ENCODE measurements at regions of chr2 and their contacts with region 1.

Region 1: DNA sequence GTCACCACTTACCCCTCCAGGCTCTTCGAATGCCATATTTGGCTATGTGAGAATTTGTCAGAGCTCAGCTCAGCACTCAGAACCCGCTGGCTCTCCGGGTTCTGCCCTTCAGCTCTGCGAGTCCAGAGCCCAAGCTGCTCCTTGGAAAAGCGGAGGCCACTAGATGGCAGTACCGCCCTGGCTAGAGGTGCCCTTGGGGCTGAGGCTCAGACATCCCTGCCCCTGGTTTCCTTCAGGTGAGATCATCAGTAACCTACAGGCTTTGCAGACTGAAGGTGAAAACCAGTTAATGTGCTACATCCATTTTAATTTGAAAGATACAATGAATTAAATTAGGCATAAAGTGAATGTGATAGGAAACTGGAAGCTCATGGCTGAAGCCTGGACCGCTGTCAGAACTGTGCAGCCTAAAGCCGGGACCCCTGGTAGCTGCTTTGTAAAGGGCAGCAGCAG is 285.6 kb downstream of the AGAP1 start:
- DNase-seq: no peak
- H3K4me3 ChIP-seq: no peak overlapping the region
- H3K27ac ChIP-seq: no peak overlapping the region
- H3K4me1 ChIP-seq: no peaks in the 10 kb centered on the region
- H3K27me3 ChIP-seq: no peaks in the 10 kb centered on the region
- CTCF ChIP-seq: peak; percentile 21 to 77 (median 33)
- POLR2A ChIP-seq: no peak

Region 2: GRCh38 chr2:236177967-236178899 is 398.8 kb after region 1 on chr2:
- intact Hi-C with region 1: loop called (anchors 5 kb)
- DNase-seq: no peak
- H3K4me3 ChIP-seq: no peak overlapping the region
- H3K27ac ChIP-seq: no peak overlapping the region
- H3K4me1 ChIP-seq: peaks cover 22% of the 10 kb centered on the region
- H3K27me3 ChIP-seq: peaks cover 35% of the 10 kb centered on the region
- CTCF ChIP-seq: peak in 2 of 3 experiments; percentile 29 to 49
- POLR2A ChIP-seq: no peak

Region 3: GRCh38 chr2:236286873-236287545 is 507.5 kb after region 1 on chr2:
- intact Hi-C with region 1: no loop called
- DNase-seq: peak; percentile 54 to 79
- H3K4me3 ChIP-seq: no peak overlapping the region
- H3K27ac ChIP-seq: no peak overlapping the region
- H3K4me1 ChIP-seq: no peaks in the 10 kb centered on the region
- H3K27me3 ChIP-seq: no peaks in the 10 kb centered on the region
- CTCF ChIP-seq: no peak
- POLR2A ChIP-seq: no peak